ENCODE measurements at regions of chr17 and their contacts with region 1.

Region 1: GRCh38 chr17:67982034-67982640 is 14.1 kb downstream of the C17orf58 start:
- DNase-seq: no peak
- H3K4me3 ChIP-seq: no peak overlapping the region
- H3K27ac ChIP-seq: no peak overlapping the region
- H3K4me1 ChIP-seq: no peaks in the 10 kb centered on the region
- H3K27me3 ChIP-seq: no peaks in the 10 kb centered on the region
- CTCF ChIP-seq: no peak
- EP300 ChIP-seq: no peak
- POLR2A ChIP-seq: no peak
- RAD21 ChIP-seq: no peak

Region 2: GRCh38 chr17:67902511-67903231 is 79.5 kb before region 1 on chr17:
- CTCF ChIA-PET with region 1: no interaction called
- POLR2A ChIA-PET with region 1: no interaction called
- DNase-seq: no peak
- H3K4me3 ChIP-seq: no peak overlapping the region
- H3K27ac ChIP-seq: no peak overlapping the region
- H3K4me1 ChIP-seq: no peaks in the 10 kb centered on the region
- H3K27me3 ChIP-seq: no peaks in the 10 kb centered on the region
- CTCF ChIP-seq: no peak
- EP300 ChIP-seq: no peak
- POLR2A ChIP-seq: no peak
- RAD21 ChIP-seq: no peak

Region 3: GRCh38 chr17:67942810-67943209 is 39.3 kb before region 1 on chr17:
- CTCF ChIA-PET with region 1: no interaction called
- POLR2A ChIA-PET with region 1: no interaction called
- DNase-seq: no peak
- H3K4me3 ChIP-seq: no peak overlapping the region
- H3K27ac ChIP-seq: no peak overlapping the region
- H3K4me1 ChIP-seq: no peaks in the 10 kb centered on the region
- H3K27me3 ChIP-seq: no peaks in the 10 kb centered on the region
- CTCF ChIP-seq: peak in 2 of 3 experiments; percentile 34 to 67; a peak in 2 of 4 replicates
- EP300 ChIP-seq: no peak
- POLR2A ChIP-seq: no peak
- RAD21 ChIP-seq: peak; percentile 14 to 42; a peak in 2 of 4 replicates

Region 4: DNA sequence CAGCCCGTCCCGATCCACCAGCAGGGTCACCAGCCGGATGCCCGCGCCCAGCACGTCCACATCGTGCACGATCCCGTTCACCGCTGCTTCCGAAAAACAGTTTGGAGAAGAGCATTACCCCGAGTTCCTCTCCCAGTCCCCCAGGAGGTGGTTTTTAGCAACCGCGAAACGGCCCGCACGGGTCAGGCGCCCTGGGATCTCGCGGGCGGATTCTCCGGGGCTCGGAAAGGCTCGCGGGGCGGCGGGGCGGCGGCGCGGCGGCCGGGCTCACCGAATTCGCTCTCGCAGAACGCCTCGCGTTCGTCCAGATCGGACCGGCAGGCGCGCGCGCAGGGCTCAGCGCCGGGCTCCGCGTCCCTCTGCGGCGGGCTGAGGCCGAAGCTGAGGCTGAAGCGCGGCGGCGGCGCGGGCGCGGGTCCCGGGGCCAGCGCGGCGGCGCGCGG is 11.0 kb after region 1 on chr17:
- CTCF ChIA-PET with region 1: interaction called, 8 read pairs
- POLR2A ChIA-PET with region 1: interaction called, 13 read pairs
- DNase-seq: peak in 1 of 2 experiments; percentile 84
- H3K4me3 ChIP-seq: peak overlapping the region; percentile 84 to 95 (median 86)
- H3K27ac ChIP-seq: peak overlapping the region; percentile 66; the same call in 1 of the 2 replicates
- H3K4me1 ChIP-seq: peaks cover 0 to 13% (median 7%) of the 10 kb centered on the region in 4 experiments; a peak in 4 of 7 replicates
- H3K27me3 ChIP-seq: peaks cover 0 to 21% (median 10%) of the 10 kb centered on the region in 4 experiments; a peak in 6 of 7 replicates
- CTCF ChIP-seq: no peak
- EP300 ChIP-seq: no peak
- POLR2A ChIP-seq: peak in 1 of 2 experiments; percentile 26; a peak in 2 of 3 replicates
- RAD21 ChIP-seq: no peak

Region 5: GRCh38 chr17:68143425-68143824 is 161.3 kb after region 1 on chr17:
- CTCF ChIA-PET with region 1: no interaction called
- POLR2A ChIA-PET with region 1: no interaction called
- DNase-seq: peak in 1 of 2 experiments; percentile 22
- H3K4me3 ChIP-seq: no peak overlapping the region
- H3K27ac ChIP-seq: no peak overlapping the region
- H3K4me1 ChIP-seq: no peaks in the 10 kb centered on the region
- H3K27me3 ChIP-seq: no peaks in the 10 kb centered on the region
- CTCF ChIP-seq: no peak
- EP300 ChIP-seq: no peak
- POLR2A ChIP-seq: no peak
- RAD21 ChIP-seq: no peak

Measured in H1 (cell line).